AG04450 (cell line): ENCODE measurements at regions of chr6 and their contacts with region 1.

Region 1: DNA sequence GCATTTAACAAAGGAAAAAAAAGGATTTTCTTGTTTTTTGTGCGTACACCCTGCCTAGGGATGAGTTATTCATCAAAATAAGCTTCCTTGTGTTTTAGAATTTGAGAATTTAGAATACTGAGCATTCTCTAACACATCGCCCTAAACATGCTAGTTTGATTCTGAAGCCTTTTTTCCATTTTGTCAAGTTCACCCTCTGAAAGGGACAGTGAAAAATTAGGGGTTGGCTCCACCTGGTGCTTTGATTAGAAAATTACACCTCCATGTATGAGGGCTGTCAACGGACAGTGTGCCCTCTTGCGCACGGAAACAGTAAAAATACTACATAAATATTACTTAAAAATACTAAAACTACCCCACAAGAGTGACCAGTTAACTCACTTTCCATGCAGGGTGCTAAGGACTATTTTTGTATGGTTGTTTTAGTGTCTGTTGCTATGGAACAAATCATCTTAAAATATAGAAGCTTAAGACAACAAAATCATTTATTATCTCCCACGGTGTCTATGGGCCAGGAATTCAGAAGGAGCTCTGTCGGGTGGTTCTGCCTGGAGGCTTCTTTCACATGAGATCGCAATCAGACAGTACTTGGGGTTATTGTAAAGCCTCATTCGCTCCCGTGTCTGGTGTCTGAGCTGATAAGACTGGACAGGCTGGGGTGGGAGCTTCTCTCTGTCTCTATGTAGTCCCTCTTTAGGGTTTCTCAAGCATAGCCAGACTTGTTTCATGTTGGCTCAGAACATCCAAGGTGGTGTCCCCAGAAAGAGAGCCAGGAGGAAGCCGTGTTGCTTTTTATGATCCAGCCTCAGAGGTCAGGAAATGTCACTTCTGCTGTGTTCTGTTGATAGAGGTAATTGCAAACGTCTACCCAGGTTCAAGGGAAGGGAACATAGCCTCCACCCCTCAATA is 41.1 kb upstream of the TMEM170B start:
- DNase-seq: peak; percentile 74
- H3K4me3 ChIP-seq: no peak overlapping the region
- H3K27ac ChIP-seq: no peak overlapping the region
- H3K27me3 ChIP-seq: no peaks in the 10 kb centered on the region
- CTCF ChIP-seq: peak; percentile 83

Region 2: DNA sequence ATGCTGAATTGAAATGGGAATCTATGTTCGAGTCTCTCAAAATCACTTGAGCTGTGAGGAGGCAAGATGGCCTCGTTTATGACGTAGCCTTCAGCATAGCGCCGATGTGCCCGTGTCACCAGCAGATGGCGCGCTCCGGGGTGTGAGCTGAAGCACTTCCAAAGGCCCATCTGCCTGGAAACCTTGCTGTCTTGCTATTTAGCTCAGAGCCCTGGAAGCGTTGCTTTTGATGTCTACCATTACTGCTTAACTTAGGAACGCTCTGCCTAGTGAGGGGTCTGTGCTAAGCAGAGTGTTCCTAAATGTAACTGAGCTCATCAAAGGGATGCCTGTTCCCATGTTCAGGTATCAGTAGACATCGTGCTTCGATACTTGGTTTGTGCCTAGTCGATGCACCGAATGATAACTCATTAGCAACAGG is 541.8 kb before region 1 on chr6:
- CTCF ChIA-PET with region 1: interaction called, 80 read pairs
- POLR2A ChIA-PET with region 1: no interaction called
- DNase-seq: peak; percentile 58
- H3K4me3 ChIP-seq: no peak overlapping the region
- H3K27ac ChIP-seq: no peak overlapping the region
- H3K27me3 ChIP-seq: no peaks in the 10 kb centered on the region
- CTCF ChIP-seq: peak; percentile 86

Region 3: GRCh38 chr6:11123978-11124377 is 372.4 kb before region 1 on chr6:
- CTCF ChIA-PET with region 1: interaction called, 14 read pairs
- POLR2A ChIA-PET with region 1: no interaction called
- DNase-seq: no peak
- H3K4me3 ChIP-seq: no peak overlapping the region
- H3K27ac ChIP-seq: no peak overlapping the region
- H3K27me3 ChIP-seq: no peaks in the 10 kb centered on the region
- CTCF ChIP-seq: peak; percentile 28

Region 4: GRCh38 chr6:11172501-11173332 is 323.7 kb before region 1 on chr6:
- CTCF ChIA-PET with region 1: interaction called, 51 read pairs
- POLR2A ChIA-PET with region 1: no interaction called
- DNase-seq: no peak
- H3K4me3 ChIP-seq: no peak overlapping the region
- H3K27ac ChIP-seq: no peak overlapping the region
- H3K27me3 ChIP-seq: no peaks in the 10 kb centered on the region
- CTCF ChIP-seq: peak; percentile 80

Region 5: GRCh38 chr6:11241793-11242201 is 254.6 kb before region 1 on chr6:
- CTCF ChIA-PET with region 1: interaction called, 24 read pairs
- POLR2A ChIA-PET with region 1: no interaction called
- DNase-seq: no peak
- H3K4me3 ChIP-seq: no peak overlapping the region
- H3K27ac ChIP-seq: no peak overlapping the region
- H3K27me3 ChIP-seq: no peaks in the 10 kb centered on the region
- CTCF ChIP-seq: peak; percentile 65

Region 6: DNA sequence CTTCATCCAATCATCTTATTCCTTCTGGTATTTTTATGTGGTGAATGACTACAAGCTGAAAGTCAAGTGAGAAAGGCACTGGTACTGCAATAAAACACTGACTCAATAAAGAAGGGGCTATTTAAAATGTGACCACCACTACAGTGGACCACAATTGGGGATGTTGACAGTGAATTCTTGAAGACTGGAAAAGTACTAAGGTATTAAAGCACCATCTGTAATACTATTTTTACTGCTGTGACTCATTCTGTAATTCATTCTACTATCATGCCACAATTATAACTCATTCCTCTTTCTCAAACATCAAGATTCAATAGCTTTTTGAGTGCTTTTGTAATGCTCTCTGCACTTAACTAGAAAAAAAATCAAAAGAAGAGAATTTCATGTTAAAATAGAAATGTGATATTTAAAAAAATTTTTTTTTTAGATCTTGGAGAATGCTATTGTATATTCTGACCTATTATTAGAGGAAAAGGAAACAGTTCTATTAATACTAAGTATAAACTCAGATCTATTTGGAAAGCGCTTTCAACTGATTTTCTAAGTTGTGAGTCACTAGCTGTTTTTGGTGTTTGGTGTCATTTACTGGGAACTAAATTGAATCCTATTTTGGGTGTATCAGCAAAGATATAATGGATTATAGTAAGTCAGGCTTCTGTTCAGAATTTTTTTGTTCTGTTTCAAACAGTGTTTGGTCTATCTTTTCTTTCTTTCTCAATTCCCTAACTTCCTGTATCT is 63.5 kb before region 1 on chr6:
- CTCF ChIA-PET with region 1: interaction called, 15 read pairs
- POLR2A ChIA-PET with region 1: no interaction called
- DNase-seq: no peak
- H3K4me3 ChIP-seq: no peak overlapping the region
- H3K27ac ChIP-seq: no peak overlapping the region
- H3K27me3 ChIP-seq: no peaks in the 10 kb centered on the region
- CTCF ChIP-seq: no peak

Region 7: GRCh38 chr6:11653028-11653583 is 156.7 kb after region 1 on chr6:
- CTCF ChIA-PET with region 1: no interaction called
- POLR2A ChIA-PET with region 1: no interaction called
- DNase-seq: peak; percentile 83
- H3K4me3 ChIP-seq: no peak overlapping the region
- H3K27ac ChIP-seq: peak overlapping the region; percentile 89
- H3K27me3 ChIP-seq: no peaks in the 10 kb centered on the region
- CTCF ChIP-seq: no peak

Region 8: DNA sequence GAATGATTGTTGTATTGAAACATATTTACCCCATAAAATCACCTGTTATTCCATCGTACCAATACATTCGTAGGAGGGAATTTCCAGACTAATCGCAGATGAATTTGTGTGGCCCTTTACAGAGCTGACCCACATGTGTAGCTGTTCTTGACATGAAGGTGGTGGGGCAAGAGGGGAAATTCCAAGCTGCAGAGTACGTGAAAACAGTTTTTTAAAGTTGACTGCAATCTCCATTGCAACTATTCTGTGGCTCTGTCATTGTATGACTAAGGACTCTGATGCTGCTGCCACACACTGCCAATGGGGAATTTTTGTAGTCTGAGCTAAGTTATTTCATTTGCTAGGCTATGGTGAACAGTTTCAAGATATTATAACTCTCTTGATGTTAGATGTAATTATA is 328.6 kb after region 1 on chr6:
- CTCF ChIA-PET with region 1: no interaction called
- POLR2A ChIA-PET with region 1: no interaction called
- DNase-seq: no peak
- H3K4me3 ChIP-seq: no peak overlapping the region
- H3K27ac ChIP-seq: no peak overlapping the region
- H3K27me3 ChIP-seq: no peaks in the 10 kb centered on the region
- CTCF ChIP-seq: no peak

Region 9: DNA sequence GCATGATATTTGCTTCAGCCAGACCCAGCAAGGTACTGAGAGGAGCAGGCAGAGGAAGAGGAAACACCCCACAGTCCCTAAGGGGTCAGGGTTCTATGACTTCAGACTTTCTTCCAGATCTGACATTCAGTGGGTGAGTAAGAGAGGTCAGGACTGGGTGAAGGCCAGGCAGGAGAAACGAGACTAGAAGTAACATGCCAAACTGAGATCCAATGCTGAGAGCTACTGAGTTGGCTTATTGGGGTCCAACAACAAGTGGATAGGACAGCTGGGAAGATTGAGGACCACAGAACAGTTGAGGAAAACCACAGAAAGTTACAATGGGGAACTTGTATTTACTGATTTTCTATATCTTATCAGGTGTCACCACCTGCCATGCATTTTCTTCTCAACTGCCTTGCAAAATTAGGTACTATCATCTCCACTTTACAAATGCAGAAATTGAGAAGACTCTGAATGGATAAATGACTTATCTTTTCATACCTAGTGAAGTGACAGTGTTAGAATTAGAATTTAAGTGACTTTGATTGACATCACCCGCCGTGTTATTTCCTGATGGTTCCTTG is 471.9 kb after region 1 on chr6:
- CTCF ChIA-PET with region 1: no interaction called
- POLR2A ChIA-PET with region 1: no interaction called
- DNase-seq: no peak
- H3K4me3 ChIP-seq: no peak overlapping the region
- H3K27ac ChIP-seq: no peak overlapping the region
- H3K27me3 ChIP-seq: no peaks in the 10 kb centered on the region
- CTCF ChIP-seq: no peak